ENCODE measurements at regions of chr7 and their contacts with region 1.

Region 1: GRCh38 chr7:23462846-23463245 is 7.4 kb downstream of the IGF2BP3 start:
- DNase-seq: peak; percentile 59 to 79 (median 79)
- H3K4me3 ChIP-seq: peak overlapping the region in 1 of 7 experiments; percentile 39
- H3K27ac ChIP-seq: no peak overlapping the region
- H3K4me1 ChIP-seq: peaks cover 3 to 60% (median 29%) of the 10 kb centered on the region in 4 experiments
- H3K27me3 ChIP-seq: peaks cover 0 to 60% (median 30%) of the 10 kb centered on the region in 5 experiments

Region 2: DNA sequence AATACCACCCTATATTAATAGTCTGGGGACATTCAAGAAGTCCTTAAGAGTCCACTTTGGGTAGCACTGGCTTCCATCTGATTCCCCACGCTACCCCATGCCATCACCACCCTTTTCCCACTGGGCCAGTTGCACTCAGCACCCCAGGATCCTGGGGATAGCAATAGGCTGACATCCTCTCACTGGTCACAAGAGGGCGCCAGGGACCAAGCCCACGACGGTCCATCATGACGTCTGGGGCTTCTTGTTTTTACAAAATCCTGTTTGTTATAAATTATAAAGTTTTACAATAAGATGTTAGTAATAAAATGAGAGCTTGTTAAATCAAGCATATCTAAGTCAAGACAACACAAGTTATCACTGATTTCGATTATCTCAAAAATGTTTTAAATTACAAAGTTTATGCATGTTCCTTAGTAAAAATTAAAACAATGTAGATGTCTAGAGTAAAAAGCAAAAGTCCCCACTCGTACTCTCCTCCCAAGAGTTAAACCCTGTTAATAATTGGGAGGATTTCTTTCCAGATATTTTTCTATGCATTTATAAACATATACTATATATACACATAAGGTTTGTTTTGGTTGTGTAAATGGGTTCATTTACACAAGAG is 200.9 kb before region 1 on chr7:
- CTCF ChIA-PET with region 1: interaction called, 11 read pairs
- POLR2A ChIA-PET with region 1: no interaction called
- DNase-seq: peak; percentile 70 to 80 (median 79)
- H3K4me3 ChIP-seq: no peak overlapping the region
- H3K27ac ChIP-seq: no peak overlapping the region
- H3K4me1 ChIP-seq: no peaks in the 10 kb centered on the region
- H3K27me3 ChIP-seq: peaks cover 0 to 2% (median 0%) of the 10 kb centered on the region in 5 experiments

Region 3: GRCh38 chr7:23472956-23473843 is 10.4 kb after region 1 on chr7:
- CTCF ChIA-PET with region 1: interaction called, 17 read pairs
- POLR2A ChIA-PET with region 1: no interaction called
- DNase-seq: peak in 2 of 3 donors; percentile 20 to 26
- H3K4me3 ChIP-seq: peak overlapping the region in 2 of 7 experiments; percentile 90 to 97
- H3K27ac ChIP-seq: peak overlapping the region in 1 of 2 experiments; percentile 77
- H3K4me1 ChIP-seq: peaks cover 33 to 42% (median 37%) of the 10 kb centered on the region in 4 experiments
- H3K27me3 ChIP-seq: peaks cover 0 to 98% (median 51%) of the 10 kb centered on the region in 5 experiments

Region 4: GRCh38 chr7:23600251-23600650 is 137.4 kb after region 1 on chr7:
- CTCF ChIA-PET with region 1: no interaction called
- POLR2A ChIA-PET with region 1: no interaction called
- DNase-seq: no peak
- H3K4me3 ChIP-seq: no peak overlapping the region
- H3K27ac ChIP-seq: no peak overlapping the region
- H3K4me1 ChIP-seq: peaks cover 12 to 15% (median 14%) of the 10 kb centered on the region in 4 experiments
- H3K27me3 ChIP-seq: no peaks in the 10 kb centered on the region

Measured in common myeloid progenitor, CD34-positive (primary cell).